GM12878 (cell line): ENCODE measurements at regions of chr11 and their contacts with region 1.

Region 1: GRCh38 chr11:134261626-134262488 is 8.5 kb downstream of the ACAD8 start:
- DNase-seq: no peak
- ATAC-seq: peak; percentile 83
- H3K4me3 ChIP-seq: no peak overlapping the region
- H3K27ac ChIP-seq: no peak overlapping the region
- H3K4me1 ChIP-seq: peaks cover 3% of the 10 kb centered on the region
- H3K27me3 ChIP-seq: no peaks in the 10 kb centered on the region
- CTCF ChIP-seq: peak; percentile 51 to 67 (median 62)
- EP300 ChIP-seq: no peak
- POLR2A ChIP-seq: no peak
- RAD21 ChIP-seq: peak; percentile 66

Region 2: GRCh38 chr11:134272381-134273316 is 10.8 kb after region 1 on chr11:
- CTCF ChIA-PET with region 1: interaction called, 15 read pairs
- POLR2A ChIA-PET with region 1: no interaction called
- RAD21 ChIA-PET with region 1: no interaction called
- SMC1A ChIA-PET with region 1: interaction called, 3 read pairs
- in situ Hi-C with region 1: no loop called
- intact Hi-C with region 1: no loop called
- DNase-seq: no peak
- ATAC-seq: no peak
- H3K4me3 ChIP-seq: no peak overlapping the region
- H3K27ac ChIP-seq: no peak overlapping the region
- H3K4me1 ChIP-seq: peaks cover 6% of the 10 kb centered on the region
- H3K27me3 ChIP-seq: peaks cover 8 to 20% of the 10 kb centered on the region in 2 experiments
- CTCF ChIP-seq: no peak
- EP300 ChIP-seq: no peak
- POLR2A ChIP-seq: no peak
- RAD21 ChIP-seq: no peak